ENCODE measurements at regions of chr17 and their contacts with region 1.

Region 1: GRCh38 chr17:58352014-58352842 is at the start of gene SUPT4H1:
- H3K4me3 ChIP-seq: peak within 1 kb of the TSS; percentile 93
- H3K27ac ChIP-seq: peak within 1 kb of the TSS; percentile 96
- H3K4me1 ChIP-seq: peaks cover 9% of the 10 kb centered on the region
- CTCF ChIP-seq: no peak

Region 2: DNA sequence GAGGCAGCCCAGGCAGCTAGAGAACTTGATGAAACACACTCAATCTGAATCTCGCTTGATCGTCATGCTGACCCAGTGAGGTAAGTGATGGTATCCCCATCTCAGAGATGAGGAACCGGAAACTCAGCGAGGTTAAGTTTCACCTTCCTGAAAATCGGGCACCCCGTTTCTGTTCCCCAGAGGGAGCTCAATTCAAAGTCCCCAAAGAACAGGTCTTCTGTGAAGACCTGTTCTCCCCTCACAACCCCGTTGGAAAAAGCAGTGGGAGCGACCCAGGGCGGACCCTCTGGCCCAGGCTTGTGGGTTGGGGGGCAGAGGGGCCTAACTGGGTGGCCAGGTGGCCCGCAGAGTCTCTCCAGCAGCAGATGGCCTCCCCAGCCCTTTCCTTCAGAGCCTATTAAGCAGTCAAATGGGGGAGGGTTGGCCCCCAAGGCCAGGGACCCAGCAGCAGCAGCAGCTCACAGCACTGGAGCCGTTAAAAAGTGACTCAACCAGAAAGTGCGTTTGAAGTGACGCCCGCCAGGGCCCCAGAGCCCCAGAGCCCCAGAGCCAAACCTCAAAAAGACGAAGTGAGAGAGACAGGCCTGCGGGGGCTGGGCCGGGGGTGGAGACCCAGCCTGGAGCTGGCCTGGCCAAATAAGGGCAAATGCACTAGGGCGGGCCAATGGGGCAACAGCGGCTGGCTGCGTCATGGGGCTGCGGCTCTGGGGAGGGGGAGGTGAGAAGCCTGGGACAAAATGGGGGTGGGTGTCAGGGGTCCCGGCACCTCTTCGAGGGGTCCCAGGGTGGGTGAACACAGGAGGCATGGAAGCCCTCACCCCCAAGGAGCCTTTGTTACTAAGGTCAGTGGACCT is 14.4 kb before region 1 on chr17:
- CTCF ChIA-PET with region 1: interaction called, 10 read pairs
- POLR2A ChIA-PET with region 1: interaction called, 36 read pairs
- H3K4me3 ChIP-seq: no peak overlapping the region
- H3K27ac ChIP-seq: no peak overlapping the region
- H3K4me1 ChIP-seq: no peaks in the 10 kb centered on the region; the same call in 1 of the 2 replicates
- CTCF ChIP-seq: no peak

Region 3: DNA sequence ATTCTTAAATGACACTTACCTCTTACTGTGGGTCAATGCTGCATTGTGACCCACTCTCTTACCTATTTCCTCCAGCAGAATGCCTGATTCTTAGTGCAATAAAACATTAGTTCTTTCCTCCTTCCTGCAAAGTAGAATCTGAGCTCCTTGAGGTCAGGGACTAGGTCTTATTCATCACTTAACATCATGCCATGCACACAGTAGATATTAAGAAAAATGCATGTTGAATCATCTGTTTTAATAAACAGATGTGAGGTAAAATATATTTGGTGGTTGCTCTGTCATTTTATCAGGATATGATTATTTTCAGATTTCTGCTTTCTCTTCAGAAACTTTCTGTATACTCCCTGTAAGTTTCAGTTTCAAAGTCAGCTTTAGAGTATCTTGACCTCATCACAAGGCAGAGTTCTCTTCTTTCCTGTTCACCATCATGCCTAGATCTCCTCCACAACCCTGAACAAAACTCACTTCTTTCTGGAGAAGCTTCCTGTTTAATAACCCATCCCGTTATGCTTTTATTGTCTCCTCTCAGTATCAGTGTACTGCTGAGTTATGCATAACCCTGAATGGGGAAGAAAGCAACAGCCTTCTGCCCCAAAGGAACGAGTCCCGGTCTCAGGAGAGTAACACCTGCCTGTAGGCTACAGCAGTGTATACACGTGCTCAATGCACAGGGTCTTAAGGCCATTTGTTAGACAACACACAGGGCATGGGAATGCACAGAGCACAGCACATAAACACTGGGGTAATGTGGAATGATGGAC is 30.1 kb after region 1 on chr17:
- CTCF ChIA-PET with region 1: interaction called, 3 read pairs
- POLR2A ChIA-PET with region 1: interaction called, 11 read pairs
- H3K4me3 ChIP-seq: no peak overlapping the region
- H3K27ac ChIP-seq: no peak overlapping the region
- H3K4me1 ChIP-seq: peaks cover 14% of the 10 kb centered on the region
- CTCF ChIP-seq: no peak

Region 4: DNA sequence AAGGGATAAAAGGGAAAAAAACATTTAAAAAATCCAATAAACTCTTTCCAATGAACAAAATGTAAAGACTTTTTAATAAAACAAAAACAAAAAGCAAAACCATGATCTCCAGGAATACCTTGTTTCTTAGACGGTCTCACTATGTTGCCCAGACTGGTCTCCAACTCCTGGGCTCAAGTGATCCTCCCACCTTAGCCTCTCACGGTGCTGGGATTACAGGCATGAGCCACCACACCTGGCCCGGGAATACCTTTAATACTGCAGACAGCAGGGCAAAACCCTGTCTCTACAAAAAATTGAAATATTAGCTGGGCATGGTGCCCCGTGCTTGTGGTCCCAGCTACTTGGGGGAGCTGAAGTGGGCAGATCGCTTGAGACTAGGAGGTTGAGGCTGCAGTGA is 57.2 kb after region 1 on chr17:
- CTCF ChIA-PET with region 1: interaction called, 22 read pairs
- POLR2A ChIA-PET with region 1: interaction called, 130 read pairs
- H3K4me3 ChIP-seq: no peak overlapping the region
- H3K27ac ChIP-seq: no peak overlapping the region
- H3K4me1 ChIP-seq: peaks cover 43% of the 10 kb centered on the region
- CTCF ChIP-seq: no peak